MCF 10A (cell line): ENCODE measurements at regions of chr18 and their contacts with region 1.

Region 1: GRCh38 chr18:31274915-31275314 is 43.0 kb upstream of the DSG1 start:
- DNase-seq: peak; percentile 99
- H3K4me3 Mint-ChIP-seq: peak overlapping the region; percentile 59
- H3K27ac Mint-ChIP-seq: peak overlapping the region; percentile 97
- H3K4me1 Mint-ChIP-seq: peaks cover 34% of the 10 kb centered on the region
- H3K27me3 Mint-ChIP-seq: no peaks in the 10 kb centered on the region
- CTCF ChIP-seq: no peak

Region 2: GRCh38 chr18:31255953-31256352 is 19.0 kb before region 1 on chr18:
- CTCF ChIA-PET with region 1: interaction called, 16 read pairs
- POLR2A ChIA-PET with region 1: interaction called, 36 read pairs
- intact Hi-C with region 1: no loop called
- DNase-seq: peak; percentile 85
- H3K4me3 Mint-ChIP-seq: peak overlapping the region; percentile 12
- H3K27ac Mint-ChIP-seq: peak overlapping the region; percentile 64
- H3K4me1 Mint-ChIP-seq: peaks cover 16% of the 10 kb centered on the region
- H3K27me3 Mint-ChIP-seq: no peaks in the 10 kb centered on the region
- CTCF ChIP-seq: no peak

Region 3: GRCh38 chr18:31325051-31325450 is 50.1 kb after region 1 on chr18:
- CTCF ChIA-PET with region 1: no interaction called
- POLR2A ChIA-PET with region 1: interaction called, 19 read pairs
- intact Hi-C with region 1: loop called (anchors 1 kb)
- DNase-seq: peak; percentile 94
- H3K4me3 Mint-ChIP-seq: no peak overlapping the region
- H3K27ac Mint-ChIP-seq: peak overlapping the region; percentile 50
- H3K4me1 Mint-ChIP-seq: peaks cover 8% of the 10 kb centered on the region
- H3K27me3 Mint-ChIP-seq: no peaks in the 10 kb centered on the region
- CTCF ChIP-seq: no peak

Region 4: GRCh38 chr18:31490387-31490786 is 215.5 kb after region 1 on chr18:
- CTCF ChIA-PET with region 1: no interaction called
- POLR2A ChIA-PET with region 1: interaction called, 27 read pairs
- intact Hi-C with region 1: no loop called
- DNase-seq: peak; percentile 73
- H3K4me3 Mint-ChIP-seq: no peak overlapping the region
- H3K27ac Mint-ChIP-seq: peak overlapping the region; percentile 65
- H3K4me1 Mint-ChIP-seq: peaks cover 49% of the 10 kb centered on the region
- H3K27me3 Mint-ChIP-seq: no peaks in the 10 kb centered on the region
- CTCF ChIP-seq: no peak